GM12878 (cell line): ENCODE measurements at regions of chr2 and their contacts with region 1.

Region 1: DNA sequence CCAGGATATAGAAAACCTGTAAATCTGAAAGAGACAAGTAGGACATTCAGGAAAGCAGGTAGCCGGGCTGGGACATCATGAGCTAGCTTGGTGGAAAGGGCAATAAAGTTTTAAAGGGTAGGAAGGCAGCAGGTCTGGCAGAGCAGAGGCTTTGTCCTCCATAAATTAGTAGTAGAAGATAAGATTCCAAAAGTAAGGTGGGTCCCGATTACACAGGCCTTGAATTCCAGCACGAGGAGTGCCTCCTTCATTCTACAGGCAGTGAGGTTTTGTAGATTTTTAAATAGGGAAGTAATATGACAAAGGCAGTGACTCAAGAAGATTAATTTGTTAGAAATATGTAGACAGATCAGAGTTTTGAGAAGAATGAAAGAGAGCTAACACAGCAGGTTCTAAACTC is 160.7 kb downstream of the DTNB start:
- DNase-seq: no peak
- ATAC-seq: no peak
- H3K4me3 ChIP-seq: no peak overlapping the region
- H3K27ac ChIP-seq: no peak overlapping the region
- H3K4me1 ChIP-seq: peaks cover 18% of the 10 kb centered on the region
- H3K27me3 ChIP-seq: no peaks in the 10 kb centered on the region
- CTCF ChIP-seq: no peak
- EP300 ChIP-seq: no peak
- POLR2A ChIP-seq: no peak
- RAD21 ChIP-seq: no peak

Region 2: GRCh38 chr2:25497918-25498407 is 14.7 kb before region 1 on chr2:
- CTCF ChIA-PET with region 1: interaction called, 7 read pairs
- POLR2A ChIA-PET with region 1: interaction called, 3 read pairs
- RAD21 ChIA-PET with region 1: interaction called, 4 read pairs
- SMC1A ChIA-PET with region 1: interaction called, 31 read pairs
- in situ Hi-C with region 1: no loop called
- intact Hi-C with region 1: no loop called
- DNase-seq: no peak
- ATAC-seq: peak; percentile 92
- H3K4me3 ChIP-seq: no peak overlapping the region
- H3K27ac ChIP-seq: peak overlapping the region; percentile 65
- H3K4me1 ChIP-seq: peaks cover 15% of the 10 kb centered on the region
- H3K27me3 ChIP-seq: no peaks in the 10 kb centered on the region
- CTCF ChIP-seq: no peak
- EP300 ChIP-seq: peak; percentile 35 to 60; a peak in 2 of 4 replicates
- POLR2A ChIP-seq: no peak
- RAD21 ChIP-seq: no peak